ENCODE measurements at regions of chr16 and their contacts with region 1.

Region 1: GRCh38 chr16:78770353-78771091 is 671.1 kb downstream of the WWOX start:
- DNase-seq: peak; percentile 90
- ATAC-seq: peak; percentile 23
- H3K4me3 Mint-ChIP-seq: peak overlapping the region; percentile 20
- H3K27ac Mint-ChIP-seq: peak overlapping the region; percentile 79
- H3K4me1 Mint-ChIP-seq: peaks cover 57% of the 10 kb centered on the region
- H3K27me3 Mint-ChIP-seq: peaks cover 6% of the 10 kb centered on the region

Region 2: GRCh38 chr16:78122774-78123315 is 647.7 kb before region 1 on chr16:
- CTCF ChIA-PET with region 1: no interaction called
- POLR2A ChIA-PET with region 1: no interaction called
- intact Hi-C with region 1: loop called in 1 of 2 experiments (anchors 2 kb)
- DNase-seq: peak; percentile 33
- ATAC-seq: peak; percentile 65
- H3K4me3 Mint-ChIP-seq: no peak overlapping the region
- H3K27ac Mint-ChIP-seq: no peak overlapping the region
- H3K4me1 Mint-ChIP-seq: peaks cover 5% of the 10 kb centered on the region
- H3K27me3 Mint-ChIP-seq: no peaks in the 10 kb centered on the region

Region 3: GRCh38 chr16:78503602-78504001 is 266.9 kb before region 1 on chr16:
- CTCF ChIA-PET with region 1: interaction called, 5 read pairs
- POLR2A ChIA-PET with region 1: no interaction called
- intact Hi-C with region 1: loop called (anchors 1 to 2 kb)
- DNase-seq: peak; percentile 67
- ATAC-seq: peak; percentile 49
- H3K4me3 Mint-ChIP-seq: no peak overlapping the region
- H3K27ac Mint-ChIP-seq: no peak overlapping the region
- H3K4me1 Mint-ChIP-seq: no peaks in the 10 kb centered on the region
- H3K27me3 Mint-ChIP-seq: no peaks in the 10 kb centered on the region

Region 4: GRCh38 chr16:78742501-78743283 is 27.8 kb before region 1 on chr16:
- CTCF ChIA-PET with region 1: interaction called, 3 read pairs
- POLR2A ChIA-PET with region 1: interaction called, 3 read pairs
- intact Hi-C with region 1: loop called in 1 of 2 experiments (anchors 1 kb)
- DNase-seq: peak; percentile 89
- ATAC-seq: peak; percentile 95
- H3K4me3 Mint-ChIP-seq: peak overlapping the region; percentile 61
- H3K27ac Mint-ChIP-seq: peak overlapping the region; percentile 96
- H3K4me1 Mint-ChIP-seq: peaks cover 22% of the 10 kb centered on the region
- H3K27me3 Mint-ChIP-seq: no peaks in the 10 kb centered on the region

Region 5: GRCh38 chr16:79047229-79047983 is 276.9 kb after region 1 on chr16:
- CTCF ChIA-PET with region 1: no interaction called
- POLR2A ChIA-PET with region 1: no interaction called
- intact Hi-C with region 1: loop called in 1 of 2 experiments (anchors 10 kb)
- DNase-seq: peak; percentile 28
- ATAC-seq: peak; percentile 36
- H3K4me3 Mint-ChIP-seq: no peak overlapping the region
- H3K27ac Mint-ChIP-seq: no peak overlapping the region
- H3K4me1 Mint-ChIP-seq: peaks cover 33% of the 10 kb centered on the region
- H3K27me3 Mint-ChIP-seq: no peaks in the 10 kb centered on the region

Region 6: DNA sequence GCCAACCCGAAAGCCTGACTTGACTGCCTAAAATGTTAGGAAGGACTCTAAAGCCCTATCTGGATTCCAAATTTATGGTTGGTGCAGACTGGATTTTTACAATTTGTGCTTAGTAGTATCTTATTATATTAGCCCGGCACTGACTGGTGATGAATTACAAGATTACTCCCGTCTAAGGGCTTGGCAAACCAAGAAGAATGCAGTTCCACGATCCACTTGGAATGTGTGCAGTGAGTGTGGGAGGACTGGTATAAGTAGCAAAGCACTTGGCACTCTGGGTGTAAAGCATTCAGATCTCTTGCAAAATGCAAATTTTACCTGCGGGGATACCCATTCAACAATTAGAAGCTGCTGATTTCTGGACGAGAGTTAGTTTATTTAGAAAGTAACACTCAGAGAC is 290.7 kb after region 1 on chr16:
- CTCF ChIA-PET with region 1: no interaction called
- POLR2A ChIA-PET with region 1: no interaction called
- intact Hi-C with region 1: no loop called
- DNase-seq: no peak
- ATAC-seq: no peak
- H3K4me3 Mint-ChIP-seq: no peak overlapping the region
- H3K27ac Mint-ChIP-seq: no peak overlapping the region
- H3K4me1 Mint-ChIP-seq: peaks cover 10% of the 10 kb centered on the region
- H3K27me3 Mint-ChIP-seq: no peaks in the 10 kb centered on the region

Region 7: DNA sequence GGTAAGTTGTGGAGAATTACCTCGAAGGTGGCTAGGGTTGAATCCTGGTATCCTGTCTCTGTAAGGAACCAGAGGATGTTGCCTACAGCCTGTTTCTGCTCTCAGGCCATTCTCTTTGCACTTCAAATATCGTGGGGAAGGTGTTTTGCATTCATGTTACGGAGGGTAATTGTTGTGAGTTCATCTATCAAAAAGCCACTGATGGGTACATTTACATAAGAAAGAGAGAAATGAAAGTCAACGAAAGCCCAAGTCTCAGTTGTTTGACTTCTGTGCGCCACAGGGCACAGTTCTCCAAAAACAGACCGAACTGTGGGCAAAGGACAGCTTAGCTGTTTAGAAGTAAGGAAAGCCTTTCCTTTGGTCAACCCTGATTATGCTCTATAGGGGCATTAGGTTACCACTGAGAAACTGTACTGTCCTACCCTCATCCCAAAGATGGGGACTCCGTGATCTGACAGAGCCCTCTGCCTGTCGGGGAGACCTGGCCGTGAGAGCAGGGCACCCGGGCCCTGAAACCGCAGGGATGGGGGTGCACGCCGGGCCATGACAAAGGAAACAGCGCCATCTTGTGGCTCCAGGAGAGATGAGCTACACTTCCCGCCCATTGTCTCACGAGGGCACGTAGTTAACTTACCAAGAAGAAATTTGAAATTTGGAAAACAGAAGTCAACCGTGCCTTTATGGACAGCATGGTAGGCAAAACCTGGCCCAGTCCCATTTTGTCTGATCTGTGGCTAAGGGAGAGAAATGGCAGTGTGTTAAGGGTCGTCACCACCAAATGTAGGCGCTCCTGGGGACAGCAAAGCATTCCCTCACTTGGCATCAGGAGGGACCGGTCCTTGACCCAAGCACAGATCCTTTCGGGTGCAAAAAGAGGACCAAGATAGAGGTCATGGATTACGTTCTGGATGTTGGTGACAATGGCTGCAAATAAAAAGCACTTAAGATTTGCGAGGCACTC is 1695.8 kb after region 1 on chr16:
- CTCF ChIA-PET with region 1: no interaction called
- POLR2A ChIA-PET with region 1: no interaction called
- intact Hi-C with region 1: loop called in 1 of 2 experiments (anchors 5 kb)
- DNase-seq: peak; percentile 82
- ATAC-seq: peak; percentile 78
- H3K4me3 Mint-ChIP-seq: no peak overlapping the region
- H3K27ac Mint-ChIP-seq: no peak overlapping the region
- H3K4me1 Mint-ChIP-seq: no peaks in the 10 kb centered on the region
- H3K27me3 Mint-ChIP-seq: peaks cover 9% of the 10 kb centered on the region

Measured in activated CD4-positive, alpha-beta T cell treated with anti-CD3 and anti-CD28 coated beads for 36 hours (primary cell).